PC-9 (cell line): ENCODE measurements at regions of chr20 and their contacts with region 1.

Region 1: DNA sequence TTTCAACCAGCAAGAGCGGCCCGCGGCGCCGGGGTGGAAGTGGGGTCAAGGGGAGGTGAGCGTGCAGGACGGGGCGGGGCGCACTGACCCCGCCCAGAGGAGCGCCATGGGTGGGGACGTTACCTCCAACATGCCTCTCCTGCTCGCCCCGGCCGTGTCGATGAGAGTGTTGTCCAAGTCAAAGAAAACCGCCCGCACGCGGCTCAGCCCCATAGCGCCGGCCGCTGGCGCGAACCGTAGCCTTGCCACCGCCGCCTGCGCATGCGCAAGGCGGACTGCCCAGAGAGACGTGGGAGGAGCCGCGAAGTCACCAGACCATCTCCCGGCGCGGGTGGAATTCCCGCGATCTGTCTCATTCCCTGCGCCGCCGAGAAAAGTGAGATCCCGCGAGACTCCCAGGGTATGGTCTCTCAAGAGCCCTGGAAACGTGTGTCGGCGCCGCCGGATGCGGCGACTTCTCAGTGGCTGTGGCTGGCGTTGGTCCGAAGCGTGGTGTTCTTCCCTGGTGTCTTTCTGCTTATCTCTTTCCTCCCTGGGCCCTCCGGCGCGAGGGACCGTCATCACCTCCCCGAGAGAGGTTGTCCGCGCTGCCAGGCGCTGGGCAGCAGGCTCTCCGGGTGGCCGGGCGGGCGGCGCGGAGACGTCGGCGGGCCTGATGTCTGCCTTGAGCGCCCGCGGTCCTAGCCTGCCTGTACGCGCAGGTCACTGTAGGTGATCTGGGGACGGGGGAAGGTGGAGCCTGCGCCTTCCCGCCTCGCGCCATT is at the start of gene NANP:
- DNase-seq: peak; percentile 94 to 99
- H3K4me3 ChIP-seq: peak within 1 kb of the TSS; percentile 98
- H3K27ac ChIP-seq: peak within 1 kb of the TSS; percentile 97
- H3K4me1 ChIP-seq: peaks cover 26% of the 10 kb centered on the region
- H3K27me3 ChIP-seq: no peaks in the 10 kb centered on the region
- CTCF ChIP-seq: no peak
- total RNA-seq, gene NANP: 5.6 and 7.5 TPM in 2 replicates

Region 2: GRCh38 chr20:25407311-25408169 is 216.4 kb before region 1 on chr20 and contains the start of gene GINS1:
- CTCF ChIA-PET with region 1: no interaction called
- POLR2A ChIA-PET with region 1: no interaction called
- intact Hi-C with region 1: loop called (anchors 5 kb)
- DNase-seq: peak; percentile 78 to 95
- H3K4me3 ChIP-seq: peak within 1 kb of the TSS; percentile 74
- H3K27ac ChIP-seq: 0 out of 2 replicates have a peak within 1 kb of the TSS, but pooled peaks have one; percentile 7
- H3K4me1 ChIP-seq: peaks cover 12% of the 10 kb centered on the region; the same call in 1 of the 2 replicates
- H3K27me3 ChIP-seq: no peaks in the 10 kb centered on the region
- CTCF ChIP-seq: no peak
- total RNA-seq, gene GINS1: 26.6 and 27.8 TPM in 2 replicates

Region 3: DNA sequence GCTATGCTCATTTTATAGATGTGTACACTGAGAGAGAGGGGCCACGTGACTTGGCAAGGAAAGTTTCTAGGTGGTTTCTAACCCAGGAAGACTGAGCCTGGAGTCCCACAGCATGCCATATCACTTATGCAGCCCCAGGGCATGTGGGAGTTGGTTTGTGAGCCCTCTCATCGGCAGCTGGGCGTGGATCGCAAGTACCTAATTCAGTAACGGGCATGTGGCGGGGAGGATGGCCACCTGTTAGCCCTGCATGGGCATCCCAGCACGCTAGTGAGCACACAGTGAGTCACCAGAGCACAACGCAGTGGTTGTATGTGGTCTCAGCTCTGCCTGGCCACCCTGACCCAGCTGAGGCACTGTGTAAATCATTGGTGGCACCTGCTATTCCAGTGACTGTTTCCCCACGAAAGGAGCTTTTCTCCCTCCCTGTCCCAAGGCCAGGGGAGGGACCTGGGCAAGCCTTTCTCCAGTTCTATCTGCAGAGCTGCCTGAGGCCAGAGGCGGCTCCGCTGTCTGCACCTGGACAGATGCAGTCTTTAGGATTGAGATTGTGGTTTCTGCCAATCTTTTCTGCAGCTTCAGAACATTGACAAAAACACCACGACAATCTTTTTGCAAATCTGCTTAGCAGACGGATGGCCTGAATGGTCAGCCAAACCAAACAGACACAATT is 126.8 kb before region 1 on chr20:
- CTCF ChIA-PET with region 1: no interaction called
- POLR2A ChIA-PET with region 1: interaction called, 3 read pairs
- intact Hi-C with region 1: loop called (anchors 10 kb)
- DNase-seq: peak; percentile 91 to 92
- H3K4me3 ChIP-seq: no peak overlapping the region
- H3K27ac ChIP-seq: no peak overlapping the region
- H3K4me1 ChIP-seq: peaks cover 13% of the 10 kb centered on the region
- H3K27me3 ChIP-seq: no peaks in the 10 kb centered on the region
- CTCF ChIP-seq: no peak

Region 4: GRCh38 chr20:25584905-25585704 is 38.8 kb before region 1 on chr20 and contains the start of gene NINL:
- CTCF ChIA-PET with region 1: no interaction called
- POLR2A ChIA-PET with region 1: no interaction called
- intact Hi-C with region 1: loop called (anchors 2 kb)
- DNase-seq: peak; percentile 51 to 80
- H3K4me3 ChIP-seq: peak within 1 kb of the TSS; percentile 94
- H3K27ac ChIP-seq: no peak within 1 kb of the TSS
- H3K4me1 ChIP-seq: peaks cover 11% of the 10 kb centered on the region; the same call in 1 of the 2 replicates
- H3K27me3 ChIP-seq: no peaks in the 10 kb centered on the region
- CTCF ChIP-seq: no peak
- total RNA-seq, gene NINL: 19.6 and 39.9 TPM in 2 replicates

Region 5: DNA sequence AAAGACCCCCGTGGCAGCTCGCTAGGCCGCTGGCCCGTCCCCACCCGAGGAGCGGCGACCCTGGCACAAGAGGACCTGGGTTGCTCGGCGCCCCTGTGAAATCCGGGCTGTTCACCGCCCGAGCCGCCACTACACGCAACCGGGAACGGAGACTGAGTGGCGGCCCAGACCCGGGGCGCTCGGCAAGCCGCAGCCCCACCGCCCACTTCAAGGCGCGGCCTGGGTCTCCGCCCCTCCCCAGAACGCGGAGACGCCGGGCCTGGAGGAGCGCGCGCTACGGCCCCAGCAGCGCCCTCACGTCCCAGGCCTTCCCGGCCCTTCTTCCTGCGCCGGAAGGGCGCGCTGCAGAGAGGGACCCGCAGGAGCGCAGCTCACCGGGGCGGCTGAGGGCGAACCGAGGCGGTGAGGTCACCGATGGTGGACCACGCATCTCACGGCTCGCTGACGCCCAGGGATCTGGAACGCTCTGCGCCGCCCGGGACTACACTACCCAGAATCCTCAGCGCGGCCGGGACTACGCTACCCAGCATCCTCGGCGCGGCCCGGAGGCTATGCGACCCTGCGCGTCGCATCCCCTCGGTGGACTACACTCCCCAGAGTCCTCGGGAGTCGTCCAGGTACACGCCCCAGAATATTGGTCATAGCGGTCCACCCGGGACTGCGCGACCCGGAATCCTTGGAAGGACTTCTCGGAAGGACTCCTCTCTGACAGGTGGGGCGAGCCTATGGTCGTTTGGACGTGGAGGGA is 72.6 kb after region 1 on chr20 and contains the start of gene ZNF337:
- CTCF ChIA-PET with region 1: no interaction called
- POLR2A ChIA-PET with region 1: interaction called, 5 read pairs
- intact Hi-C with region 1: loop called (anchors 2 kb)
- DNase-seq: peak; percentile 80 to 96
- H3K4me3 ChIP-seq: peak within 1 kb of the TSS; percentile 77
- H3K27ac ChIP-seq: peak within 1 kb of the TSS; percentile 49
- H3K4me1 ChIP-seq: peaks cover 7% of the 10 kb centered on the region; the same call in 1 of the 2 replicates
- H3K27me3 ChIP-seq: no peaks in the 10 kb centered on the region
- CTCF ChIP-seq: no peak
- total RNA-seq, gene ZNF337: 12.8 and 14.6 TPM in 2 replicates

Region 6: GRCh38 chr20:25706793-25707192 is 82.9 kb after region 1 on chr20:
- CTCF ChIA-PET with region 1: no interaction called
- POLR2A ChIA-PET with region 1: no interaction called
- intact Hi-C with region 1: no loop called
- DNase-seq: no peak
- H3K4me3 ChIP-seq: no peak overlapping the region
- H3K27ac ChIP-seq: no peak overlapping the region
- H3K4me1 ChIP-seq: no peaks in the 10 kb centered on the region
- H3K27me3 ChIP-seq: no peaks in the 10 kb centered on the region
- CTCF ChIP-seq: no peak

Region 7: DNA sequence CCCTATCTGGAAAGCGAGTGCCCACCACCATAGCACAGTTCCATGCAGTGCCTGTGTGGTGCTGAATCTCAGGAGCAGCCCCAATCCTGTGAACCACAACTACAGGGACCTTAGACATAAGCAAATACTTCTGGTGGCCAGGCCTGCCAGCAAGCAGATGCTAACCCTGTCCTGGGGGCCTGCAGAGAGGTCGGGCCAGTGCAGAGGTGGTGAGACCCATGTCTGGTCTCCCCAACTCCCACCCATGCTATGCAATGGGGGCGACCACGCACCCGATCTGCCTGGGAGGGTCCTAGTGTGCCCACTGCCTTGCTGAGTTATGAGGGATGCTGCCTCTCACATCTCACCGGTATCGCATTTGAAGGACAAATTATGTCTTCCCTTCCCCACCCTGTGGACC is 224.3 kb after region 1 on chr20:
- CTCF ChIA-PET with region 1: no interaction called
- POLR2A ChIA-PET with region 1: no interaction called
- intact Hi-C with region 1: no loop called
- DNase-seq: no peak
- H3K4me3 ChIP-seq: no peak overlapping the region
- H3K27ac ChIP-seq: no peak overlapping the region
- H3K4me1 ChIP-seq: no peaks in the 10 kb centered on the region
- H3K27me3 ChIP-seq: no peaks in the 10 kb centered on the region
- CTCF ChIP-seq: no peak

Region 8: GRCh38 chr20:26216025-26216424 is 592.1 kb after region 1 on chr20:
- CTCF ChIA-PET with region 1: interaction called, 10 read pairs
- POLR2A ChIA-PET with region 1: no interaction called
- intact Hi-C with region 1: no loop called
- DNase-seq: no peak
- H3K4me3 ChIP-seq: no peak overlapping the region
- H3K27ac ChIP-seq: no peak overlapping the region
- H3K4me1 ChIP-seq: no peaks in the 10 kb centered on the region
- H3K27me3 ChIP-seq: no peaks in the 10 kb centered on the region
- CTCF ChIP-seq: no peak